PC-9 (cell line): ENCODE measurements at regions of chr22 and their contacts with region 1.

Region 1: DNA sequence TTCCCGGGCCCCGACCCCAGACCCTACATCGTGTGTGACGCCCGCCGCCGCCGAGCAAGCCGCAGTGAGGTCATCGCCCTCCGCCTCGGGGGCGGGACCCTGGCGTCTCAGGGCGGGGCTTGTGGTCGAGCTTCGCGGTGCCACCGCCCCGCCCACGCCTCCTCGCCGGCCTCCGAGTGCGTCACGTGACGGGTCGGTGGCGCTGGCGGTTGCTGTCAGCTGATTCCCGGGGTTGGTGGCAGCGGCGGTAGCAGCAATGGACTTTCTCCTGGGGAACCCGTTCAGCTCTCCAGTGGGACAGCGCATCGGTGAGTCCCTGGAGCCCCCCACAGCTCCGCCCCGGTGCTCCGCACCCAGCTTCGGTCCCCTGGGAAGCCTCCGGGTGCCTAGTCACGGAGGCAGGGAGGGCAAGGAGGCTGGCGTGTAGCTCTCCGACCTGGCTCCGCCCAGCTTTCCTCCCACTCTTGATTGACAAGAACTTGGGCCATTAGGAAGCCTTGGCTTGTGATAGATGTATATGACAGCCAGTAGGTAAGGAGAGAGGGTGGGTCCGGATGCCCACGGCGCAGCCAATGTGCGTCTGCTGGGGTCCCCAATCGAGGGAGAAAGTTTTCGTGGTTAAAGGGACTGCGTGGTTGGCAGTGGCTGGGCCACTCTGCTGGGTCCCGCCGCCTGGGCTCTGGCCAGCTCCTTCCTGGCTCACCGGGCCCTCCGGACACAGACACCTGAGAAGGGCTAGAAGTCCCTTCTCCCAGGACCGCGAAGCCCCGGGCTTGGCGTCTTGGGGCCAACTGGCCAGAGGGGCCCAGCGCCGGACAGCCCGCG is at the start of gene TOM1:
- DNase-seq: peak; percentile 96
- H3K4me3 ChIP-seq: peak within 1 kb of the TSS; percentile 75
- H3K27ac ChIP-seq: peak within 1 kb of the TSS; percentile 91
- H3K4me1 ChIP-seq: peaks cover 30% of the 10 kb centered on the region
- H3K27me3 ChIP-seq: no peaks in the 10 kb centered on the region
- CTCF ChIP-seq: no peak
- total RNA-seq, gene TOM1: 43.6 and 45.1 TPM in 2 replicates

Region 2: GRCh38 chr22:35177811-35178210 is 122.1 kb before region 1 on chr22:
- CTCF ChIA-PET with region 1: no interaction called
- POLR2A ChIA-PET with region 1: no interaction called
- intact Hi-C with region 1: no loop called
- DNase-seq: no peak
- H3K4me3 ChIP-seq: no peak overlapping the region
- H3K27ac ChIP-seq: no peak overlapping the region
- H3K4me1 ChIP-seq: no peaks in the 10 kb centered on the region
- H3K27me3 ChIP-seq: peaks cover 22% of the 10 kb centered on the region
- CTCF ChIP-seq: no peak

Region 3: DNA sequence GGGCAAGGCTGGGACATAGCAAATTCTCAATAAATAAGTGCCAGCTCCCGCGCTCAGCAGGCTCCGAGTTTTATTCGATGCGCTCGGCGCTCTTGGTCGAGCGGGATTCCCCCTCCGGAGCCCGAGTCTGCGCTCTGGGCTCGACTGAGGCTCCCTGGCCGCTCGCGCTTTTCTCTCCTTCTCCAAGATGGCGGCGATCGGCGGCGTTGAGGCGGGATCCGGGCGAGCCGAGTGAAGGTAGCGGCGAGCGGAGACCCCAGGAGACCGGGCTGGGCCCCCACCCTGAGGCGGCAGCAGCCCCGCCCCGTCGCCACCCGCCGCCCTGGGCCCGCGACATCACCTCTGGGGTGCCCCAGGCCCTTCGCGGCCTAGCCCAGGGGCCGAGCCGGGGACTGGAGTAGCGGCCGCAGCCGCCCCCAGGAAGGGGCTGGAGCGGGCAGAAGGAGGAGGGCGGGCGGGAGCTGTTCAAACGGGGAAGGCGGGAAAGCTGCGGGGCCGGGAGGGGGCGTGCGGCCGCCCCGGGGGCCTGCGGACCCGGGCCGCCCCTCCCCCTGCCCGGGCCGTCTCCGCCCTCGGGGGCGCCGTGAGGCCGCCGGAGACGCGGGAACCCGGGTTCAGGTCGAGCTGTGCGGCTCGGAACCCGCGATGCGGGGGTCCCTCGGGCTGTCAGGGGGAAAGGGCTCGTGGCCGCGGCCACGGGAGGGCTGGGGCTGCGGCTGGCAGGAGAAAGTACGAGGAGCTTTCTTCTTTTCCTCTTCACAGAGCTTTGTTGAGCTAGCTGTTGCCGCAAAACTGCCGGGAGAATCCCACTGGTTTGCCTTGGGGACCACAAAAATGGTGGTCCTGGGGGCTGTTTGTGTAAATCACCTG is 42.3 kb before region 1 on chr22 and contains the start of gene HMGXB4:
- CTCF ChIA-PET with region 1: no interaction called
- POLR2A ChIA-PET with region 1: interaction called, 15 read pairs
- intact Hi-C with region 1: no loop called
- DNase-seq: peak; percentile 74 to 75
- H3K4me3 ChIP-seq: peak within 1 kb of the TSS; percentile 61
- H3K27ac ChIP-seq: peak within 1 kb of the TSS; percentile 61
- H3K4me1 ChIP-seq: peaks cover 13% of the 10 kb centered on the region
- H3K27me3 ChIP-seq: no peaks in the 10 kb centered on the region
- CTCF ChIP-seq: no peak; the same call in 1 of the 2 replicates
- total RNA-seq, gene HMGXB4: 29.2 and 31.1 TPM in 2 replicates

Region 4: GRCh38 chr22:35313311-35314121 is 13.6 kb after region 1 on chr22:
- CTCF ChIA-PET with region 1: interaction called, 3 read pairs
- POLR2A ChIA-PET with region 1: interaction called, 18 read pairs
- intact Hi-C with region 1: loop called (anchors 1 kb)
- DNase-seq: peak in 1 of 2 experiments; percentile 23
- H3K4me3 ChIP-seq: no peak overlapping the region
- H3K27ac ChIP-seq: peak overlapping the region; percentile 74
- H3K4me1 ChIP-seq: peaks cover 64% of the 10 kb centered on the region
- H3K27me3 ChIP-seq: no peaks in the 10 kb centered on the region
- CTCF ChIP-seq: no peak

Region 5: GRCh38 chr22:35367301-35367886 is 67.5 kb after region 1 on chr22:
- CTCF ChIA-PET with region 1: no interaction called
- POLR2A ChIA-PET with region 1: interaction called, 19 read pairs
- intact Hi-C with region 1: loop called (anchors 10 kb)
- DNase-seq: no peak
- H3K4me3 ChIP-seq: no peak overlapping the region
- H3K27ac ChIP-seq: no peak overlapping the region
- H3K4me1 ChIP-seq: peaks cover 50% of the 10 kb centered on the region
- H3K27me3 ChIP-seq: no peaks in the 10 kb centered on the region
- CTCF ChIP-seq: no peak

Region 6: GRCh38 chr22:36028646-36029405 is 728.9 kb after region 1 on chr22 and contains the start of gene RBFOX2:
- CTCF ChIA-PET with region 1: no interaction called
- POLR2A ChIA-PET with region 1: interaction called, 15 read pairs
- intact Hi-C with region 1: no loop called
- DNase-seq: peak; percentile 91 to 99
- H3K4me3 ChIP-seq: peak within 1 kb of the TSS; percentile 74
- H3K27ac ChIP-seq: peak within 1 kb of the TSS; percentile 29
- H3K4me1 ChIP-seq: peaks cover 22% of the 10 kb centered on the region
- H3K27me3 ChIP-seq: no peaks in the 10 kb centered on the region
- CTCF ChIP-seq: no peak
- total RNA-seq, gene RBFOX2: 81.7 and 109 TPM in 2 replicates